ENCODE measurements at regions of chr7 and their contacts with region 1.

Region 1: GRCh38 chr7:143416565-143417149 is 8.0 kb upstream of the EPHA1 start:
- H3K4me3 Mint-ChIP-seq: no peak overlapping the region
- H3K27ac Mint-ChIP-seq: no peak overlapping the region
- H3K4me1 Mint-ChIP-seq: peaks cover 41% of the 10 kb centered on the region
- H3K27me3 Mint-ChIP-seq: no peaks in the 10 kb centered on the region

Region 2: DNA sequence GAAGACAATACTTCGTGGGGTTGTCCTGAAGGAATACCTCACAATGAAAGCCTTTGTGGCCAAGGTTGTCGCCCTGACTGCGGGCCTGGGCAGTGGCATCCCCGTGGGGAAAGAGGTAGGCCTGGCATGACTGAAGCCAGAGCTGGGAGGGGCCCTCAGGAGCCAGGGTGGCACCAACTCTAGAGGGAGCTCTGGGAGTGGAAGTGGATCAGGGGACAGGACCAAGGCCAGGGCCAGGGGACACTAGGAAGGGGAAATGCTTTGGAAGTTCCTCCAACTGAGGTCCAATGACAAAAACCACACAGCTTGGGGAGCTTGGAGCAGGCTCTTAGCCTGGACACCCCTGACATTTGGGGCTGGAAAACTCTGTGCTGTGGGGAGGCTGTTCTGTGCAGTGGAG is 94.9 kb before region 1 on chr7:
- intact Hi-C with region 1: loop called (anchors 5 kb)
- H3K4me3 Mint-ChIP-seq: no peak overlapping the region
- H3K27ac Mint-ChIP-seq: peak overlapping the region; percentile 66
- H3K4me1 Mint-ChIP-seq: peaks cover 88% of the 10 kb centered on the region
- H3K27me3 Mint-ChIP-seq: no peaks in the 10 kb centered on the region

Region 3: GRCh38 chr7:143487566-143487965 is 70.9 kb after region 1 on chr7:
- intact Hi-C with region 1: loop called (anchors 10 kb)
- H3K4me3 Mint-ChIP-seq: no peak overlapping the region
- H3K27ac Mint-ChIP-seq: peak overlapping the region; percentile 83
- H3K4me1 Mint-ChIP-seq: peaks cover 66% of the 10 kb centered on the region
- H3K27me3 Mint-ChIP-seq: no peaks in the 10 kb centered on the region